ENCODE measurements at regions of chr5 and their contacts with region 1.

Region 1: DNA sequence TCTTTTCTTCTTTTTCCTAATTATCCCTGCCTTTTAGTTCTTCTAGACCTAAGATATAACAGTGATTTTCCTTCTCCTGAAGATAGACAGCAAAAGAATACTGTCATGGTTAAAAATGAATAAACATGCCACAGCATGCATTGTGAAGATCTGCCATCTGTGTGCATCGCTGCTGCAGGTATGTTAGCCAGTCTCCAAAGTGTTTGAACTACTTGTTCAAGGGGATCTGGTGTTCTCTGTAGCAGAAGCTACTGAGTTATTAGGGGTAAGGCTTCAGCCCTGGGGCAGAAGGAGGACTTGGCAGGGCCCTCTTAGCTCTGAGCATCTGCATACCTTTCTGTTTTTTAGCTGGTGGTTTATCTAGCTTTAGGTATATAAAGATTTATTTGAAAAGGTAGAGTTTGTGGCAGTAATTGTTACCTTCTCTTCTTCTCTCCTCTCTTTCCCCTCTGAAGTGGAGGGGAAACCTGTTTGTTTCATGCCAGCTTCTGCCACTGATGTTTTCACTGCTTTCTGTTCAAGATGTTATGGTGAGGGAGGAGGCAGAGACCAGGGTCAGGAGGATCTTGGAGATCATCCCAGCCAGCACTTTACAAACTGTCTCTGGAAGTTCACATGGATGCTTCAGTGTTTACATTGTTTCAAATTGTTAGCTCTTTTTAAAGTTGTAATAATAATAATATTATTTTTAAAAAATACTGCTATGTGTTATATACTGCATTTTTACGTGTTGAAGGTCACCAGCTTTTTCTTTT is 25.2 kb downstream of the GALNT10 start:
- DNase-seq: no peak
- ATAC-seq: no peak
- H3K4me3 ChIP-seq: no peak overlapping the region
- H3K27ac ChIP-seq: no peak overlapping the region
- H3K4me1 ChIP-seq: peaks cover 7% of the 10 kb centered on the region
- H3K27me3 ChIP-seq: no peaks in the 10 kb centered on the region
- CTCF ChIP-seq: no peak

Region 2: GRCh38 chr5:154042766-154043165 is 173.0 kb before region 1 on chr5:
- CTCF ChIA-PET with region 1: no interaction called
- POLR2A ChIA-PET with region 1: no interaction called
- in situ Hi-C with region 1: no loop called
- intact Hi-C with region 1: no loop called
- DNase-seq: no peak
- ATAC-seq: no peak
- H3K4me3 ChIP-seq: no peak overlapping the region
- H3K27ac ChIP-seq: no peak overlapping the region
- H3K4me1 ChIP-seq: peaks cover 11% of the 10 kb centered on the region
- H3K27me3 ChIP-seq: no peaks in the 10 kb centered on the region
- CTCF ChIP-seq: no peak

Region 3: GRCh38 chr5:154146409-154146808 is 69.3 kb before region 1 on chr5:
- CTCF ChIA-PET with region 1: interaction called, 13 read pairs
- POLR2A ChIA-PET with region 1: no interaction called
- in situ Hi-C with region 1: no loop called
- intact Hi-C with region 1: no loop called
- DNase-seq: no peak
- ATAC-seq: no peak
- H3K4me3 ChIP-seq: no peak overlapping the region
- H3K27ac ChIP-seq: no peak overlapping the region
- H3K4me1 ChIP-seq: no peaks in the 10 kb centered on the region
- H3K27me3 ChIP-seq: no peaks in the 10 kb centered on the region
- CTCF ChIP-seq: no peak

Region 4: GRCh38 chr5:154196955-154197652 is 18.6 kb before region 1 on chr5:
- CTCF ChIA-PET with region 1: no interaction called
- POLR2A ChIA-PET with region 1: no interaction called
- in situ Hi-C with region 1: no loop called
- intact Hi-C with region 1: no loop called
- DNase-seq: no peak
- ATAC-seq: no peak
- H3K4me3 ChIP-seq: no peak overlapping the region
- H3K27ac ChIP-seq: no peak overlapping the region; the same call in 1 of the 2 replicates
- H3K4me1 ChIP-seq: peaks cover 19% of the 10 kb centered on the region
- H3K27me3 ChIP-seq: no peaks in the 10 kb centered on the region
- CTCF ChIP-seq: peak; percentile 59; the same call in 1 of the 2 replicates